Mammary epithelial cell (primary cell): ENCODE measurements at regions of chr3 and their contacts with region 1.

Region 1: DNA sequence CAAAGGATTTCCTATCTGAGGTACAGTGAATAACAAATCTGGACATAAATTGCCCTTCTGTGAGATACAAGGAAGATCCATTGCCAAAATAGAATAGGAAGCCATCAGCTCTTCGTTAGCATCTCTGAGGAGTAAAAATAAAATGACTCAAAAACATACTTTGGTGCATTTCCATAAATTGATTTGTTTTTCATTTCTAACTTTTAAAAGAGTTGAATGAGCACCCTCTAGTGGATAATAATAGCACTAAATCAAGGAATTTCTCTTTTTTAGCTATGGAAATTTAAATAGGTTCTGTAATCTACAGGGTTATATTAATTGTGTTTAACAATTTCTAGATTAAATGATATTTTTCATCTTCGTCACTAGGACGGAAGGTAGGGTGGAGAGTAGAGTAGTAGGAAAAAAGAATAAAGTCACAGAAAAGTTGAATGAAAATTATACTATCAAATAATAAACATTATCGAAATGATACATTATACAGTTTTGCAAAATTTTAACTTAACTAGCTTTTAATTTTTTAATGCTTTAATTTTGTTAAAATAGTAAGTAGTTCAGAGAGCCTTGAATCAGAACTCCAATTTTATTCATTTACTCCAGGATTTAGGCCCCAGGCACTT is 6.4 kb downstream of the NSUN3 start:
- DNase-seq: no peak
- H3K4me3 ChIP-seq: no peak overlapping the region
- H3K27ac ChIP-seq: no peak overlapping the region
- H3K4me1 ChIP-seq: no peaks in the 10 kb centered on the region
- H3K27me3 ChIP-seq: no peaks in the 10 kb centered on the region
- CTCF ChIP-seq: peak; percentile 44 to 49

Region 2: GRCh38 chr3:93843981-93844380 is 225.3 kb before region 1 on chr3:
- CTCF ChIA-PET with region 1: no interaction called
- dilution Hi-C with region 1: no loop called
- in situ Hi-C with region 1: no loop called
- intact Hi-C with region 1: loop called (anchors 5 kb)
- DNase-seq: peak; percentile 94
- H3K4me3 ChIP-seq: no peak overlapping the region
- H3K27ac ChIP-seq: peak overlapping the region; percentile 55
- H3K4me1 ChIP-seq: peaks cover 4% of the 10 kb centered on the region
- H3K27me3 ChIP-seq: no peaks in the 10 kb centered on the region
- CTCF ChIP-seq: no peak

Region 3: GRCh38 chr3:93979833-93980676 is 89.2 kb before region 1 on chr3 and contains the start of gene ARL13B:
- CTCF ChIA-PET with region 1: no interaction called
- dilution Hi-C with region 1: no loop called
- in situ Hi-C with region 1: no loop called
- intact Hi-C with region 1: no loop called
- DNase-seq: peak; percentile 98
- H3K4me3 ChIP-seq: peak within 1 kb of the TSS; percentile 83 to 99 (median 90)
- H3K27ac ChIP-seq: peak within 1 kb of the TSS; percentile 89
- H3K4me1 ChIP-seq: peaks cover 14% of the 10 kb centered on the region
- H3K27me3 ChIP-seq: no peaks in the 10 kb centered on the region
- CTCF ChIP-seq: no peak
- total RNA-seq, gene ARL13B: 14.5 to 16.4 TPM

Region 4: GRCh38 chr3:94004301-94004910 is 64.9 kb before region 1 on chr3:
- CTCF ChIA-PET with region 1: no interaction called
- dilution Hi-C with region 1: no loop called
- in situ Hi-C with region 1: no loop called
- intact Hi-C with region 1: loop called (anchors 1 kb)
- DNase-seq: peak; percentile 36
- H3K4me3 ChIP-seq: peak overlapping the region; percentile 15 to 40 (median 22)
- H3K27ac ChIP-seq: no peak overlapping the region
- H3K4me1 ChIP-seq: no peaks in the 10 kb centered on the region
- H3K27me3 ChIP-seq: no peaks in the 10 kb centered on the region
- CTCF ChIP-seq: peak; percentile 81 to 87

Region 5: DNA sequence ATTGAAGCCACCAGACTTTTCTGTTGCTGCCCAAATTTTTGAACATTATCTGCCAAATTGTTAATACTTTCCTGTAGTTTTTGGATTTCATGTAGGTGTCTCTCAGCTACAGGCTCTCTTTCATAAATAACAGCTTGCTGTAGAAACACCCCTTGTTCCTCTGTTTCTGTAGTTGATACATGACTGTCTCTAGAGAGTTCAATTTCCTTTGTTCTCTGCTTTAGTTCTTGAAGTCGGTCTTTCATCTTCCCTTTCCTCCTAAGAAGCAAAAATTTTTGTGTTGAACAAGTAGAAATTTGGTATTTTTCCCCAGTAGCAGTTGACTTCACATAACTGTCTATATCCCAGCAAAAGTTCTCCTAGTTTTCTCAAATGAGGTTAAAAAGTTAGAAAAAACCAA is 54.3 kb before region 1 on chr3:
- CTCF ChIA-PET with region 1: no interaction called
- dilution Hi-C with region 1: no loop called
- in situ Hi-C with region 1: no loop called
- intact Hi-C with region 1: no loop called
- DNase-seq: no peak
- H3K4me3 ChIP-seq: no peak overlapping the region
- H3K27ac ChIP-seq: no peak overlapping the region
- H3K4me1 ChIP-seq: no peaks in the 10 kb centered on the region
- H3K27me3 ChIP-seq: no peaks in the 10 kb centered on the region
- CTCF ChIP-seq: no peak